ENCODE measurements at regions of chrX and their contacts with region 1.

Region 1: DNA sequence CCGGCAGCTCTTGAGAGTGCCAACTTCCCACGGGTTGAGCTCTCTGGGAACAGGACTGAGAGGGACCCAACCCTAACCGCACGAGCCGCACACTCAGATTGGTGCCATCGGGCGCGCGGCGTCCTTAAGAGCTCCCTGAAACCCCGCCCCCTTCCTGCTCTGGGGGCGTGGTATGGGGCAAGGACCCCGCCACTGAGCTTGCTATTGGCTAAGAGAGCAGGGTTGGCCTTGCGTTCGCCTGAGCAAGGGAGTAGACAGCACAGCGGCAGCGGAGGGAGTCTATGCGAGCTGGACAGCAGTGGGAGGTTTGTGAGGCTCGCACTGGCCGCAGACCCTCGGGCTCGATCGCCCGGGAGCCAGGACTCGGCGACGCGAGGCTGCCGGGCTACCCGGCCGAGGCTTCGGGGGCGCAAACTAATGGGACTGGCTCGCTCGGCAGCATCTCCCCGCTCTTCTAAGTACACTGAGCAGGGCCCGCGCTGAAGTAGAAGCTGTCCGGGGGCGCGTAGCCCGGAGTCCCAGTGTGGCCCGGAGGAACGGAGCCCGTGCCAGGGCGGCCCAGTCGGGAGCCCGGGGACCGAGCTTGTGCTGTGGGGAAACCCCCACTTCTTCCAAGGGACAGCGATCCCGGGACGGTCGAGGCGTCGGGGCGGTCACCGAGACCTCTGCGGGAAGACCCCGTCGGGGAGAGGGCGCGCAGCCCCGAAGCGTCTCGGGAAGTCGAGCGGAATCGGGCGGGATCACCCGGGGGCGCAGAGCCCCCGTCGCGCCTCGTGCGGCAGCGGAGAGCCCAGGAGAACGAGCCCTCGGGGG is at the start of gene EFNB1:
- DNase-seq: peak; percentile 96
- ATAC-seq: peak; percentile 97
- total RNA-seq, gene EFNB1: 18.0 TPM

Region 2: DNA sequence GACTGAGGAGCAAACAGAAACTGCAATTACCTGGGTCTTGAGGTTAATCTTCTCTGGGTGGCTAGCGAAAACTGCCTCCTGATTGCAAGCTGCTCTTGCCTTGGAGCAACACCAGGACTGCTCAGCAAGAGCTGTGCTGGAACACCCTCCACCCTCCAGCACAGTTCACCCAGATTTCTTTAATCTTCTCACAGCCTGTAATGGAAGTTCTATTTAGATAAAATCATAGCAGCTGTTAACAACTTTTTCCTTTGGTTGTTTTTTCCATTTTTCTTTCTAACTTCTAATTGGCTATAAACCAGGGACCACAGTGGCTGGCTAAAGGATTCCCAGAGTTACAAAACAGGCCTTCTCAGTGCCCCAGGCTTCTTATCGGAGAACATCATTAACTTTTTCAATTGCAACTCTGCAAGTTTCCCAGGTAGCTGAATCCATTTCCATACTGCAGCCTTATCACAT is 432.0 kb before region 1 on chrX:
- intact Hi-C with region 1: no loop called
- DNase-seq: no peak
- ATAC-seq: peak; percentile 90

Region 3: DNA sequence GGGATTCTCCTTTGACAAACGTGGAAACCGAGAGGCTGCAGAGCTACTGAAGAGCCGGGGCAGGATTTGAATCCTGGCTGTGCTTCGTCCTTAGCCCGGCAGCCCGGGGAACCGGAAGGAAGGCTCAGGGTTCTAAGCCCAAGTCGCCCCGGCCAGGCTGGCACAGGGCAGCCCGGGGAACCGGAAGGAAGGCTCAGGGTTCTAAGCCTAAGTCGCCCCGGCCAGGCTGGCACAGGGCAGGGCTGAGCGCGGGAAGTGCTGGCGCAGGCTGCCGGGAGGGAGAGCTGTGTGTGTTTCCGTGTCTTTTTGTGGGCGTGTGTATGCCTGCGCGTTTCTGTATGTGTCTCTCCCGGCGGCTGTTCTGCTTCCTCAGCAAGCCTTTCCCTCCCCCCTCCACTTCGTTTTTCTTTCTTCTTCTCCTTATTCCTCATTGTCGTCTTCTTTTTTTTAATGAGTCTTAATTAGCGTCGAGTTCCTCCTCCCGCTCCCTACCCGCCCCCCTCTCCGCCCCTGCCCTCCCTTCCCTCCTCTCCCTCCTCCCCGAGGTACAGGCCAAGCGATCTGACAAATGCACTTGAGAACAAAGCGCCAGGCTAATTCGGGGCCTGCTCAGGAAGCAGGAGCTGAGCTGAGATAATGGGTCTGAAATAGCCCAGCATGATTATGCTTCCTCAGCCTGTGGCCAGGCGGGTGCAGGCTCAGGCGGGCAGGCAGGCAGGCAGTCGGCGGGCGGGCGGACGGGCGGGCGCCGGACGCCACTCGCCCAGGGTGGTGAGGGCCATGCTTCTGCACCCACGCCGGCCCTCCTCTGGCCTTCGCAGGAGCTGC is 65.8 kb after region 1 on chrX:
- intact Hi-C with region 1: loop called (anchors 2 kb)
- DNase-seq: peak; percentile 80
- ATAC-seq: peak; percentile 89

Region 4: DNA sequence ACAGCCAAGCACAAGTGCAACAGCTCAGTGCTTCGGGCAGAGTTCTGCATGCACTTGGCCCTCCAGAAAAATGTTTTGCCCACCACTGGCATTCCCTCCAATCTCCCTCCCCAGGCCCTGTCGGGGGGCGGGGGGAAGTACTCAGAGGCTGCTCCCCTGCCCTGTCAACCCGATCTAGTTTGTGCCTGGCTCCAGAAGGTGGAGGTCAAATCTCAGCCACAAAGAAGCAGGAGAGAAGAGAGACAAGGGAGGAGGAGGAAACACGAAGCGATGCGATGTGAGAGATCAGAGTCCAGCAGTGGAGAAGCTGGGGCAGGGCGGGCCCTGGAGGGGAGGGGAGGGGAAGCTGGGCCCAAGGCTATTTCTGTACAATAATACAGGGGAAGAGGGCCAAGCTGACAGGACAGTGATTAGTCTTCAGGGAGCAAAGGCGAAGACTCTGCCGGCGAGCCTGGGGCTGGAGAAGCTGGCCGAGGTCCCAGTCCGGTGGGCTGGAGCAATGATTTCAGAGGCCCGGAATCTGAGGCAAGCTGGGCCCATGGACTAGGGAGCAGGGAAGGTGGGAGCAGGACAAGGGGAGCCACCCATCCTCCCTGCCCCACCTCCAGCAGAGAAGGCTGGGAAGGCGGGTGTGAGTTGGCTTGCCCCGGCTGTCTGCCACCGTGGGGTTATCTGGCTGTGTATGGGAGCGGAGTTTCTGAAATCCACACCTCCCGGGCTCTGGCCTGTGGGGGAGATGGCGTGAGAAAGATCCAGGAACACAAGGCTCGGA is 167.0 kb after region 1 on chrX:
- intact Hi-C with region 1: loop called (anchors 5 kb)
- DNase-seq: peak; percentile 73
- ATAC-seq: peak; percentile 85

Region 5: GRCh38 chrX:69165087-69165651 is 336.2 kb after region 1 on chrX and contains the start of gene PJA1:
- intact Hi-C with region 1: loop called (anchors 10 kb)
- DNase-seq: peak; percentile 87
- ATAC-seq: peak; percentile 97
- total RNA-seq, gene PJA1: 12.6 TPM

Region 6: GRCh38 chrX:69285881-69286564 is 457.1 kb after region 1 on chrX:
- intact Hi-C with region 1: loop called (anchors 5 kb)
- DNase-seq: peak; percentile 81
- ATAC-seq: peak; percentile 87